MCF 10A (cell line): ENCODE measurements at regions of chr2 and their contacts with region 1.

Region 1: GRCh38 chr2:68467077-68467960 is at the starts of genes APLF and FBXO48:
- DNase-seq: peak; percentile 100
- H3K4me3 Mint-ChIP-seq: peak within 1 kb of the TSS; percentile 95
- H3K27ac Mint-ChIP-seq: peak within 1 kb of the TSS; percentile 98
- H3K4me1 Mint-ChIP-seq: peaks cover 30% of the 10 kb centered on the region
- H3K27me3 Mint-ChIP-seq: no peaks in the 10 kb centered on the region
- CTCF ChIP-seq: no peak
- total RNA-seq, gene APLF: 4.0 TPM in 2 replicates
- total RNA-seq, gene FBXO48: 1.7 and 2.1 TPM in 2 replicates

Region 2: DNA sequence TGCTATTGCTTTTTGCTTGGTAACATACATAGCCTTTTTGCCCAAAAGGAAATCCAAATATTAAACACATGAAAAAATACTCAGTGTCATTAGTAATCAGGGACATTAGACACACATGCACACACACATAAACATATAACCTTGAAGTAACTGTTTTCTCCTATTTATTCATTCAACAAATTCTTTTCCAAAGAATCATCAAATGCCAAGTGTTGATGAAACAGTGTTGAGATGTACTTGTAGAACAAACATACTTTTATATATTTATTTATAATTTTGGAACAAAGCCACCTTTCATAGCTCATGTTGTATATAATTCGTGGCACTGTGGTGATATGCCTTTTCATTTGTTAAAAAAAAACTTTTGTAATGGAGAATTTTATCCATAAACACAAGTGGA is 81.1 kb after region 1 on chr2:
- CTCF ChIA-PET with region 1: no interaction called
- POLR2A ChIA-PET with region 1: no interaction called
- intact Hi-C with region 1: no loop called
- DNase-seq: peak; percentile 31
- H3K4me3 Mint-ChIP-seq: no peak overlapping the region
- H3K27ac Mint-ChIP-seq: no peak overlapping the region
- H3K4me1 Mint-ChIP-seq: no peaks in the 10 kb centered on the region
- H3K27me3 Mint-ChIP-seq: no peaks in the 10 kb centered on the region
- CTCF ChIP-seq: no peak

Region 3: GRCh38 chr2:68594674-68595492 is 127.6 kb after region 1 on chr2:
- CTCF ChIA-PET with region 1: interaction called, 13 read pairs
- POLR2A ChIA-PET with region 1: interaction called, 4 read pairs
- intact Hi-C with region 1: loop called (anchors 1 kb)
- DNase-seq: peak; percentile 43
- H3K4me3 Mint-ChIP-seq: no peak overlapping the region
- H3K27ac Mint-ChIP-seq: no peak overlapping the region
- H3K4me1 Mint-ChIP-seq: no peaks in the 10 kb centered on the region
- H3K27me3 Mint-ChIP-seq: no peaks in the 10 kb centered on the region
- CTCF ChIP-seq: peak; percentile 70

Region 4: GRCh38 chr2:68715353-68716041 is 248.2 kb after region 1 on chr2:
- CTCF ChIA-PET with region 1: interaction called, 49 read pairs
- POLR2A ChIA-PET with region 1: interaction called, 4 read pairs
- intact Hi-C with region 1: loop called (anchors 1 kb)
- DNase-seq: peak; percentile 79
- H3K4me3 Mint-ChIP-seq: no peak overlapping the region
- H3K27ac Mint-ChIP-seq: no peak overlapping the region
- H3K4me1 Mint-ChIP-seq: no peaks in the 10 kb centered on the region
- H3K27me3 Mint-ChIP-seq: peaks cover 22% of the 10 kb centered on the region
- CTCF ChIP-seq: peak; percentile 79

Region 5: DNA sequence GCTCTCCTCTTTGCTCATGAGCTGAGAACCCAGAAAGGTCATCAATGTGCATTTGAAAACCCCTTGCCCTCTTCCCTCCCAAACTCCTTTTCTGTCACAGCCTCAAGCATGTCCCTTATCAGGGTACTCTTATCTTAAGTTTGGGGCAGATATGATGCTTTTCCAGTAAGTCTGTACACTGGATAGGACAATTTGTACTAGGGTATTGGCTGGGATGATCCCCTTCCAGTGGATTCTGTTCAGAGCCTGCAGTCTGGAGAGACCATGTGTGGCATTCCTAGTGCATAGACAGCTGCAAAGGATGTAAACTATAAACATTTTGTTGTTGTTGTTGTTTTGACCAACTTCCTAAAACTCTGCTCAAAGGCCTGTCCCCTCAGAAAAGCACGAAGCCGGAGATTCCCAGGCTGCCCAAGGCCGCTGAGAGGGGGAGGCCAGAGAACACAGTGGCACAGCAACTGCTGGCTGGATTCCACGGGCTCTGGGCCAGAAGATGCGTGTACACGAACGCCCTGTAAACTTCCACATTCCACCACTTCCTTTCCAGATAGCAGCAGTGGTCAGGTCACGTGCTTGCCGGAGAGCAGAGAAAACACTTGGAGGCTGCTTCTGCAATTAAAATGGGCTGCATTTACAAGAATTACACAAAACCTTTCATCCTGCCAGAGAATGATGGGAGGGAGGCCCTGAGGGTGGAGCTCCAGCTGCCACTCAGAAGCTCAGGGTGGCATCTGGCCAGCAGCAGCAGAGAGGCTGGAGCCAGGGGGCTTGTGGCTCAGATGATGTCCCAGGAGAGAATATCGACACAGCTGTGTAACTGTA is 361.8 kb after region 1 on chr2:
- CTCF ChIA-PET with region 1: interaction called, 3 read pairs
- POLR2A ChIA-PET with region 1: no interaction called
- intact Hi-C with region 1: loop called (anchors 5 kb)
- DNase-seq: peak; percentile 98
- H3K4me3 Mint-ChIP-seq: no peak overlapping the region
- H3K27ac Mint-ChIP-seq: peak overlapping the region; percentile 14
- H3K4me1 Mint-ChIP-seq: peaks cover 42% of the 10 kb centered on the region
- H3K27me3 Mint-ChIP-seq: no peaks in the 10 kb centered on the region
- CTCF ChIP-seq: no peak

Region 6: GRCh38 chr2:68918497-68918896 is 451.2 kb after region 1 on chr2:
- CTCF ChIA-PET with region 1: interaction called, 43 read pairs
- POLR2A ChIA-PET with region 1: interaction called, 18 read pairs
- intact Hi-C with region 1: no loop called
- DNase-seq: peak; percentile 65
- H3K4me3 Mint-ChIP-seq: no peak overlapping the region
- H3K27ac Mint-ChIP-seq: peak overlapping the region; percentile 44
- H3K4me1 Mint-ChIP-seq: peaks cover 17% of the 10 kb centered on the region
- H3K27me3 Mint-ChIP-seq: no peaks in the 10 kb centered on the region
- CTCF ChIP-seq: no peak